ENCODE measurements at regions of chr9 and their contacts with region 1.

Region 1: GRCh38 chr9:76704593-76705204 is 59.5 kb upstream of the PCA3 start:
- DNase-seq: no peak
- ATAC-seq: peak; percentile 40 to 75 (median 52)
- H3K4me3 ChIP-seq: no peak overlapping the region
- H3K27ac ChIP-seq: no peak overlapping the region
- H3K4me1 ChIP-seq: no peaks in the 10 kb centered on the region
- H3K27me3 ChIP-seq: peaks cover 0 to 12% (median 2%) of the 10 kb centered on the region in 3 donors
- CTCF ChIP-seq: peak; percentile 70

Region 2: DNA sequence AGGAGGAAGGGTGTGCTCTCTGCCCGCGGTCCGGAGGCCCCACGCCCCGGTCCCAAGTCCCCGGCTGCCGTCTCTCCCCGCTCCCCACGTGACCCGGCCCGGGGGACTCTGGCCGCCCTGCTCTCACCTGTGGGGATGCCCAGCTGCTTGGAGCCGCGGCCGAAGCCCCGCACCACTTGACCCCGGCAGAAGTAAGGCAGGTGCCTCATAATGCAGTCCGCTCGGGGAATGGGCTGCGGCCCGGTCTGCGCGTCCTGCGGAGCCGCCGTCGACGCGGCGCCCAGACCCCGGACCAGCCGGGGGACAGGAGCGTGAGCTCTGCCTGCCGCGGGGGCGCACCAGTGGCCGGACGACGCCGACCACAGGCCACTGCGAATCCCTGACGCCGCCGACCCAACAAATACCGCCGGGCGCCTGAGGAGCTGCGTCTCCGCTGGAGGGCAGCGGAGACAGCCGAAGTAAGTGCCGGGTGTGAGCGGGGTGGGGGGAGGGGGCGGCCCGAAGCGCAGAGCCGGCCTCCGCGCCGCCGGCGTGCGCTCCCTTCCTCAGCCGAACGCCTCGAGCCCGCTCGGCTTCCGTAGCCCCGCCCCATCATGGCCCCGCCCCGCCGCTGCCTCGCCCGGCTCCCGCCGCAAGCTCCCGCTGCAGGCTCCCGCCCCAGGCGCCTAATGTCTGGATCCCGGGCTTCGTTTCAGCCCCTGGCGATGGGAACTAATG is 310.6 kb before region 1 on chr9 and contains the start of gene RFK:
- intact Hi-C with region 1: loop called in 1 of 2 experiments (anchors 5 kb)
- DNase-seq: peak; percentile 95 to 96
- ATAC-seq: peak; percentile 97 to 99 (median 98)
- H3K4me3 ChIP-seq: peak within 1 kb of the TSS; percentile 94
- H3K27ac ChIP-seq: peak within 1 kb of the TSS; percentile 90
- H3K4me1 ChIP-seq: peaks cover 4% of the 10 kb centered on the region
- H3K27me3 ChIP-seq: no peaks in the 10 kb centered on the region
- CTCF ChIP-seq: peak; percentile 36
- total RNA-seq, gene RFK: 12.4 to 18.1 (median 15.1) TPM

Region 3: DNA sequence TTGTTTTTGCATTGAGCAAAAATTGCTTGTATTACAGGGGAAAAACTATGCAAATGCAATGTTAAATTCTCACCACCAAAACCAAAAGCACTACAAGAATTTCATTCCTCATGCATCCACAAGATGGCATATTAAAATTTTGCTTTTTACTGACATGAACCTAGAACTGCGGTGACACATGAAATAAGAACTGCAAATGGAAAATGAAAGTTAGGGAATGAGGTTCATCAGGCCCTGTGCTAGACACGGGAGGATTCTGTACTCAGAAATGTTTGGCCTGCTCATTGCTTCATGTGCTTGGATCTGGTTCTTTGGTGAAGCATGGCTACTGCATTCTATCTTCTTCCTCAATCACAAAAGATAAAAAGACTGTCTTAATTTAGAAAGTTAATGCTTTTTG is 301.3 kb before region 1 on chr9:
- intact Hi-C with region 1: loop called (anchors 5 kb)
- DNase-seq: no peak
- ATAC-seq: peak in 2 of 4 donors; percentile 37 to 51
- H3K4me3 ChIP-seq: no peak overlapping the region
- H3K27ac ChIP-seq: no peak overlapping the region
- H3K4me1 ChIP-seq: no peaks in the 10 kb centered on the region
- H3K27me3 ChIP-seq: no peaks in the 10 kb centered on the region
- CTCF ChIP-seq: peak; percentile 39

Region 4: GRCh38 chr9:76445976-76446375 is 258.7 kb before region 1 on chr9:
- intact Hi-C with region 1: loop called (anchors 2 to 5 kb)
- DNase-seq: no peak
- ATAC-seq: no peak
- H3K4me3 ChIP-seq: no peak overlapping the region
- H3K27ac ChIP-seq: no peak overlapping the region
- H3K4me1 ChIP-seq: no peaks in the 10 kb centered on the region
- H3K27me3 ChIP-seq: no peaks in the 10 kb centered on the region
- CTCF ChIP-seq: no peak

Region 5: DNA sequence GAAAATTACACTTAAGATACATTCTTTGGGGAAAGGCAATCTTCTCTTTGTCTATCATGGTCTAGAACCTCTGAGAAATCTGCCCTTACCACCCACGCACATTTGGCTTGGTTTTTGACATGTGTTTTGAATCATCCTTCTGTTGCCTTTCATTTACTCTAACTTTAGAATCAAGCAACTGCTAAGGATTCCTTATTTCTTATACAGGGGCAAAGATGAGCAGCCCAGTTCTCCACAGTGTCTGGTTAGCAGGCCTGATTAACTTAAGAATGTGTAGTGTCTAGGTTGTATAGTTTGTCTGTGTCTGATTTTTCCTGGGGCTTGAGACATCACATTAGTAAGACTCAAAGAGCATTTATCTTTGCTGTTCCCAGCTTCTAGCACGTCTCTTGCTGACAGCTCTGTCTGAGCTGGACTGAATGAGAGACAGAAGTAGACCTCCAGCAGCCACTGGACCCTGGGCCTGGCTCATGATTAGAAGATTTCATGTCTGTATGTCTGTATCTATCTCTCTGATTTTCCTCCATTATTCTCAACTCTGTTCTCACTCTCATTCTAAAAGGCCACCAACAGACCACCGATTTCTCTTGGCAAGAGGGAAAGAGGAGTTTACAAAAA is 27.8 kb after region 1 on chr9:
- intact Hi-C with region 1: no loop called
- DNase-seq: no peak
- ATAC-seq: no peak
- H3K4me3 ChIP-seq: no peak overlapping the region
- H3K27ac ChIP-seq: no peak overlapping the region
- H3K4me1 ChIP-seq: no peaks in the 10 kb centered on the region
- H3K27me3 ChIP-seq: no peaks in the 10 kb centered on the region
- CTCF ChIP-seq: no peak